ENCODE measurements at regions of chr19 and their contacts with region 1.

Region 1: GRCh38 chr19:46186101-46187100 is 38.4 kb downstream of the IGFL2 start:
- DNase-seq: no peak
- H3K4me3 ChIP-seq: no peak overlapping the region
- H3K27ac ChIP-seq: no peak overlapping the region
- H3K4me1 ChIP-seq: no peaks in the 10 kb centered on the region
- H3K27me3 ChIP-seq: peaks cover 0 to 22% (median 4%) of the 10 kb centered on the region in 3 donors
- CTCF ChIP-seq: no peak
- EP300 ChIP-seq: no peak
- POLR2A ChIP-seq: no peak

Region 2: GRCh38 chr19:46030812-46031550 is 155.4 kb before region 1 on chr19:
- intact Hi-C with region 1: loop called (anchors 1 kb)
- DNase-seq: no peak
- H3K4me3 ChIP-seq: no peak overlapping the region
- H3K27ac ChIP-seq: no peak overlapping the region
- H3K4me1 ChIP-seq: peaks cover 0 to 4% (median 0%) of the 10 kb centered on the region in 4 donors
- H3K27me3 ChIP-seq: peaks cover 0 to 37% (median 4%) of the 10 kb centered on the region in 3 donors
- CTCF ChIP-seq: no peak
- EP300 ChIP-seq: no peak
- POLR2A ChIP-seq: no peak

Region 3: DNA sequence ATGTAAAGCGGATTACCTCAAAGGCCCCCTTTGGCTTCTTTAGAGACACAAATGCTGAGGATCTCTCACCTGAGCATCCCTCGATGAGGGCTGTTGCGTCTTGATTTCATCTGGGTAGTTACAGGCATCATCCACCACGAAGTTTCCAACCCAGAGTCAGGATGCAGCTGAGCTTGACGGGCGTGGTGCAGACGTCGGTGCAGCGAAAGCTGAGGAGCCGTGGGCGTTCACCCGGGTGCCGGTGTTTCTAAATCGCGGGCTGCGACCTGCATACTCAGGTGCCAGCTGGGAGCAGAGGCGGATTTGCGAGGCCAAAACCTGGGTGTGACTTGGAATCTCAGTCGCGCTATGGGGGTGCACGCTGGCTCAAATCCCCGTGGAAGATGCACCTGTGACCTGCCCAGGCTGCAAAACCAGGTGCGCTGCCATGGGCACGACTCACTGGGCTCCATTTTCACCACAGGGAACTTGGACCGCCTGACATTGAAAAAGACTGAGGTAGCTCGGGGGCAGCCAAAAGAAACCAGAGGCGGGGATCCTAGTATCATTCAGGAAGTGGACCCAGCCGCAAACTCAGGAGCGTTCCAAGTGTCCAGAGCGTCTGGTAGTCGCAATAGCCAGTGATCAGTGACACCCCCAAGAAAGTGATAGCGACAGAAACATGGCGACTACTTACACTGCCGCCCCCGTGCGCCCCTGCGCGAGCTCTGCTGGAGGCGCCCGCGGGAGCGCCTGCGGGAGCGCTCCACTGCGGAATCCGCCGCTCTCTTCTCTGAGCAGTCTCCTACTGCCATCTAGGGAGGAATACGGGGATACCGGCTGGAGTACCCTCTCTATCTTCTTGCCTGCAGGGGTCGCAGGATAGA is 109.2 kb before region 1 on chr19:
- intact Hi-C with region 1: loop called (anchors 1 kb)
- DNase-seq: peak; percentile 73
- H3K4me3 ChIP-seq: peak overlapping the region; percentile 4 to 36 (median 22)
- H3K27ac ChIP-seq: no peak overlapping the region
- H3K4me1 ChIP-seq: peaks cover 0 to 19% (median 11%) of the 10 kb centered on the region in 4 donors
- H3K27me3 ChIP-seq: peaks cover 16 to 45% (median 43%) of the 10 kb centered on the region in 3 donors
- CTCF ChIP-seq: peak in 3 of 4 experiments; percentile 42 to 55 (median 48)
- EP300 ChIP-seq: no peak
- POLR2A ChIP-seq: no peak

Region 4: DNA sequence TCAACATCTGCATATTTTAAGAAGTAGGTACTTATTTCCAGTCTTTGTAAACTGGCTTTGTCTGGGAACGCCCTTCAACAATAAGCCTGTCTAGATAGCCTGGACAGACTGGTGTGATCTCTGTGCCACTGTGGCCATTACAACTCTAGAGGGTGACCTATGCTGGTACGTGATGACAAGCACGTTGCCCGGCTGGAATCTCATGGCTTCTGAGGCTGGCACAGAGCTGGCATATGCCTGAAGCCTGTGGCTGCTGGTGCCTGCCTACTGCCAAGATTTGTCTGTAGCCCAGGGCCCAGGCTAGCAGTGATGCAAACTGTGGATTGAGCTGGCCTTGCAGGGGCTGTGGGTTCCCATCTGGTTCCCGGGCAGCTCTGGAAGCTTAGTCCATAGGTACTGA is 96.0 kb before region 1 on chr19:
- intact Hi-C with region 1: no loop called
- DNase-seq: no peak
- H3K4me3 ChIP-seq: no peak overlapping the region
- H3K27ac ChIP-seq: no peak overlapping the region
- H3K4me1 ChIP-seq: no peaks in the 10 kb centered on the region
- H3K27me3 ChIP-seq: no peaks in the 10 kb centered on the region
- CTCF ChIP-seq: no peak
- EP300 ChIP-seq: no peak
- POLR2A ChIP-seq: no peak

Region 5: GRCh38 chr19:46147791-46148288 is 38.6 kb before region 1 on chr19 and contains the start of gene IGFL2:
- intact Hi-C with region 1: no loop called
- DNase-seq: no peak
- H3K4me3 ChIP-seq: no peak within 1 kb of the TSS
- H3K27ac ChIP-seq: no peak within 1 kb of the TSS
- H3K4me1 ChIP-seq: no peaks in the 10 kb centered on the region
- H3K27me3 ChIP-seq: no peaks in the 10 kb centered on the region
- CTCF ChIP-seq: no peak
- EP300 ChIP-seq: no peak
- POLR2A ChIP-seq: no peak
- total RNA-seq, gene IGFL2: 0.49 to 1.8 TPM in 2 of 4 donors, not detected in the others

Region 6: DNA sequence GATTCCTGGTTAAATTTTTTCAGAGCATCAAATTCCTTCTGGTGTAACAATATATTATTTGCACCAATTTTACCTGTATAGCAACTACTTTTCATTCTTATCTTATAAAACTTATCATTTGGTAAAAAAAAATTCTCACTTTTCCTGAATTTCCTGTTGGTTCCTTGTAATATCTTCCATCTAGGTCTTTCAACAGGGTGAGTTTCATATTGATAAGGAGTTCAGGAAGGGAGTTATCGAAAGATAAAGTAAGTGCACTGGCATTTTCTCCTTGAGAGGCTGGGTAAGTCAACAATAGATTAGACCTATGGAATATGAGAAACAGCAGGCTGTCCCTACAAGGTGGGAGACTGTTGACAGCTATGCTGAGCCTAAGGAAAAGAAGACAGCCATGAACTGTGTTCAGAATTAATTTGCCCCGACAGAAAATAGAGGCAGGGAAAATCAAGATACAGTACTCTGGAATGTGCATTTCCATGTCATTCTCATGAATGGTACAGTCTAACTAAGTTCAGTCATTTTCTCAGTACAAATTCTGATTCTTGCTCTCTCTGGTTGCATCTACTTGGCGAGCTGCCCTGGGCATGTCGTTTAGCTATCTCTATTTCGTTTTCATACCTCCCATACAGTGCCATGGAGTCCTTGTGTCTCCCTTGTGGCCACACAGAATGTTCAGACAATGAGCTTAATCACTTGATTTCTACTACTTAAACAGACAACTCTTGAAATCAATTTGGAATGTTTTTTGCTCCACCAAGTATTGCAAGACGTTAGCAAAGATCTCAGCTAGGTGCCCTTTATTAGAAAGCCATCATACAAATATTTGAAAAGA is 53.0 kb after region 1 on chr19:
- intact Hi-C with region 1: no loop called
- DNase-seq: no peak
- H3K4me3 ChIP-seq: no peak overlapping the region
- H3K27ac ChIP-seq: no peak overlapping the region
- H3K4me1 ChIP-seq: no peaks in the 10 kb centered on the region
- H3K27me3 ChIP-seq: peaks cover 0 to 12% (median 0%) of the 10 kb centered on the region in 3 donors
- CTCF ChIP-seq: no peak
- EP300 ChIP-seq: no peak
- POLR2A ChIP-seq: no peak

Region 7: GRCh38 chr19:46265217-46265828 is 78.9 kb after region 1 on chr19:
- intact Hi-C with region 1: loop called (anchors 5 kb)
- DNase-seq: peak; percentile 76
- H3K4me3 ChIP-seq: no peak overlapping the region
- H3K27ac ChIP-seq: no peak overlapping the region
- H3K4me1 ChIP-seq: no peaks in the 10 kb centered on the region
- H3K27me3 ChIP-seq: peaks cover 0 to 13% (median 0%) of the 10 kb centered on the region in 3 donors
- CTCF ChIP-seq: peak; percentile 77 to 94 (median 82)
- EP300 ChIP-seq: no peak
- POLR2A ChIP-seq: no peak

Measured in sigmoid colon (tissue), 7 donors.